Gastrocnemius medialis (tissue), 4 donors: ENCODE measurements at regions of chr6 and their contacts with region 1.

Region 1: GRCh38 chr6:40779409-40779808 is 192.2 kb upstream of the LRFN2 start:
- DNase-seq: peak in 1 of 2 donors; percentile 16
- ATAC-seq: peak in 1 of 2 donors; percentile 13
- H3K4me3 ChIP-seq: no peak overlapping the region
- H3K27ac ChIP-seq: peak overlapping the region in 3 of 4 donors; percentile 82 to 91 (median 86)
- H3K4me1 ChIP-seq: peaks cover 42 to 44% of the 10 kb centered on the region in 2 donors
- H3K27me3 ChIP-seq: no peaks in the 10 kb centered on the region
- CTCF ChIP-seq: no peak
- POLR2A ChIP-seq: no peak

Region 2: GRCh38 chr6:40794581-40794980 is 15.2 kb after region 1 on chr6:
- in situ Hi-C with region 1: no loop called
- intact Hi-C with region 1: loop called (anchors 1 kb)
- DNase-seq: peak; percentile 34 to 35
- ATAC-seq: peak; percentile 74 to 89
- H3K4me3 ChIP-seq: no peak overlapping the region
- H3K27ac ChIP-seq: peak overlapping the region in 1 of 4 donors; percentile 50
- H3K4me1 ChIP-seq: peaks cover 14 to 16% of the 10 kb centered on the region in 2 donors
- H3K27me3 ChIP-seq: no peaks in the 10 kb centered on the region
- CTCF ChIP-seq: no peak
- POLR2A ChIP-seq: no peak